ENCODE measurements at regions of chr17 and their contacts with region 1.

Region 1: DNA sequence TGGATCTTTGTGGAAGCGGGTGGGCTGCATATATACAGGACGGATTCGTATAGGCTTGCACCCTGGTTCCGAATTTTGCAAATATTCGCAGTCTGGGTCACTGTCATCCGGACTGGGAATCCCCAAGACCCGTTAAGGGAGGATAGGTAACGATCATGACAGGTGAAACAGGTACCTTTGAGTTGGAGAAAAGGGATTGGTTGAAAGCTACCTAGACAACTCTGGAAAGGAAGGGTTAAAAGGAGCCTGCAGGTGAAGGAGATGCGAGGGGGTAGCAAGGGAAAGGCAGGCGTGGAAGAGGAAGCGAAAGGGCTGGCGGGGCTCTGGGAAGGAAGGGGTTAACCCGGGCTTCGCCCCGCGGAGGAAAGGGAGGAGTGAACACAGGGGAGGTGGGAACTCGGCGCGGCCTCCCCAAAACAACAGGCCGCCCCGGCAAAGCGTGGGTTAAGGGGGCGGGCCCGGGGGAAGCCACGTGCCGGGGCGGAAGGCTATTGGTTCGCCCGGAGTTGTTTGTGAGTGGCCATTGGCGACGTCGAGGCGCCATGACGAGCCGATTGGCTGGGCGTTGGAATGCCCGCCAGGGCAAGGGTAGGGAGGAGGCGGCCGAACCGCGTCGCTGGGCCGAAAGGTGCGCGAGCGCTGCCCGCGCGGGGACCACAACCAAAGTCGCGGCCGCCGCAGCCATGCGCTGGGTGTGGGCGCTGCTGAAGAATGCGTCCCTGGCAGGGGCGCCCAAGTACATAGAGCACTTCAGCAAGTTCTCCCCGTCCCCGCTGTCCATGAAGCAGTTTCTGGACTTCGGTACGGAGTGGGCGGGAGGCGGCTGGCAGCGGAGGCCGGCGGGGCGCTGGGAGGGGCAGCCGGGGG is at the start of gene PDK2:
- DNase-seq: peak; percentile 96 to 99 (median 99)
- ATAC-seq: peak; percentile 95
- H3K4me3 ChIP-seq: peak within 1 kb of the TSS; percentile 64
- H3K27ac ChIP-seq: peak within 1 kb of the TSS; percentile 90
- H3K4me1 ChIP-seq: peaks cover 2% of the 10 kb centered on the region
- H3K27me3 ChIP-seq: no peaks in the 10 kb centered on the region
- total RNA-seq, gene PDK2: 167 to 219 (median 182) TPM

Region 2: GRCh38 chr17:50001140-50001714 is 93.8 kb before region 1 on chr17:
- intact Hi-C with region 1: no loop called
- DNase-seq: no peak
- ATAC-seq: no peak
- H3K4me3 ChIP-seq: no peak overlapping the region
- H3K27ac ChIP-seq: no peak overlapping the region
- H3K4me1 ChIP-seq: no peaks in the 10 kb centered on the region
- H3K27me3 ChIP-seq: no peaks in the 10 kb centered on the region

Region 3: GRCh38 chr17:50026901-50027630 is 67.9 kb before region 1 on chr17:
- intact Hi-C with region 1: loop called in 1 of 4 experiments (anchors 5 kb)
- DNase-seq: peak; percentile 82 to 94 (median 93)
- ATAC-seq: peak; percentile 78 to 84
- H3K4me3 ChIP-seq: no peak overlapping the region
- H3K27ac ChIP-seq: no peak overlapping the region
- H3K4me1 ChIP-seq: no peaks in the 10 kb centered on the region
- H3K27me3 ChIP-seq: no peaks in the 10 kb centered on the region

Region 4: DNA sequence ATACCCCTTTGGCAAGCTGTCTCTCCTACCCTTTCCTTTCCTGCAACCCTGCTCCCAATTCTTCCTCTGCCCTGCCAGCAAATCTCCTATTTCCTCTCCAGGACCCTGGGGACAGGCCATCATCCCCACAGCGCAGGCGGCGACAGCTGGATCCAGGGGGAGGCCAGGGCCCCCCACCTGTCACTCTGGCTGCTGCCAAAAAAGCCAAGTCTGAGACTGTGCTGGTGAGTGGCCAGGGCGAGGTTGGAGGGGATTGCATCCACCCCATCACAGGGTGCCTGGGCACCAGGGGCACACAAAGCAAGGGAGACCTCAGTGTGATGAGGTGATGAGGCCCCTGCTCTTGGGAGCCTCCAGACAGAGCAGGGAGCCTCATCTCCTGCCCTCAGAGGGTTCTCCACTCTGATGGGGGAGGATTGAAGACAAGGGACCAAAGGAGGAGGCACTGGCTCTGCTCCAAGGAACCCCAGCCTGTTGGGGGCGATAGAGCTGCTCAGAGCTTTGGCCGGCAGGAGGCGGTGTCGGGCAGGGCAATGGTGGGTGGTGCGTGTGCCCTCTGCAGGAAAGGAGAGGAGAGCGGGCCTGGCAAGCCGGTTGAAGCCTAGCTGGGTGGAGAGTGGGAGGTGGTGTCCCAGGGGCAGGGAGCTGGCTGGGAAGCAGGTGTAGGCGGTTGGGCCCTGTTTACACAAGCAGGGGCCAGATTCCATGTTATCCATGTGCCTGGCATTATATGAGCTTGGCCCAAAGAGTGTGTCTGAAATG is 15.5 kb before region 1 on chr17:
- intact Hi-C with region 1: no loop called
- DNase-seq: peak in 2 of 3 donors; percentile 67 to 74
- ATAC-seq: peak; percentile 10 to 40
- H3K4me3 ChIP-seq: no peak overlapping the region
- H3K27ac ChIP-seq: no peak overlapping the region
- H3K4me1 ChIP-seq: no peaks in the 10 kb centered on the region
- H3K27me3 ChIP-seq: no peaks in the 10 kb centered on the region

Region 5: GRCh38 chr17:50151041-50151936 is 56.3 kb after region 1 on chr17:
- intact Hi-C with region 1: loop called in 1 of 4 experiments (anchors 10 kb)
- DNase-seq: peak; percentile 92 to 97 (median 96)
- ATAC-seq: peak; percentile 77 to 79
- H3K4me3 ChIP-seq: peak overlapping the region; percentile 86
- H3K27ac ChIP-seq: peak overlapping the region; percentile 96
- H3K4me1 ChIP-seq: peaks cover 23% of the 10 kb centered on the region
- H3K27me3 ChIP-seq: no peaks in the 10 kb centered on the region

Region 6: GRCh38 chr17:50289991-50290702 is 195.2 kb after region 1 on chr17:
- intact Hi-C with region 1: loop called (anchors 5 to 10 kb)
- DNase-seq: peak; percentile 83 to 90 (median 86)
- ATAC-seq: peak; percentile 96 to 97
- H3K4me3 ChIP-seq: no peak overlapping the region
- H3K27ac ChIP-seq: peak overlapping the region; percentile 92
- H3K4me1 ChIP-seq: peaks cover 4% of the 10 kb centered on the region
- H3K27me3 ChIP-seq: no peaks in the 10 kb centered on the region

Region 7: DNA sequence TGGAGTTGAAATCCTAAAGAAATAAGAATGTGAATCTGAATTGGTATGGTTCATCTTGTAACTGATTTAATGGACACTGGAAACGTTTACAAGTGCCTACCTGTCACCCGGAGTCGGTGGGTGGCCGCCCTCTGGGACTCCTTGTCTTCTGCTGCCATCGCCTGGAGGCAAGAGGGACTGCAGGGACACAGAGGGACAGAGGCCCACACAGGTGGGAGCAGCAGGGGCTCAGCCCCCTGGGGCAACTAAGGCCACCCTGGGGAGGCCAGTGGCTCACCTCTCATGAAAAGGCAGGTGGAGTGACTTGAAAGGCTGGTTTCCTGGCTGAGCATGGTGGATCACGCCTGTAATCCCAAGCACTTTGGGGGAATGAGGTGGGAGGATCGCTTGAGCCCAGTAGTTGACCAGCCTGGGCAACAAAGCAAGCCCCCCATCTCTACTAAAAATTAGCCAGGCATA is 202.4 kb after region 1 on chr17:
- intact Hi-C with region 1: loop called (anchors 5 to 10 kb)
- DNase-seq: peak; percentile 77 to 89 (median 88)
- ATAC-seq: peak; percentile 86 to 94
- H3K4me3 ChIP-seq: no peak overlapping the region
- H3K27ac ChIP-seq: no peak overlapping the region
- H3K4me1 ChIP-seq: no peaks in the 10 kb centered on the region
- H3K27me3 ChIP-seq: no peaks in the 10 kb centered on the region

Measured in right cardiac atrium (tissue), 5 donors.